CD14-positive monocyte (primary cell): ENCODE measurements at regions of chr1 and their contacts with region 1.

Region 1: DNA sequence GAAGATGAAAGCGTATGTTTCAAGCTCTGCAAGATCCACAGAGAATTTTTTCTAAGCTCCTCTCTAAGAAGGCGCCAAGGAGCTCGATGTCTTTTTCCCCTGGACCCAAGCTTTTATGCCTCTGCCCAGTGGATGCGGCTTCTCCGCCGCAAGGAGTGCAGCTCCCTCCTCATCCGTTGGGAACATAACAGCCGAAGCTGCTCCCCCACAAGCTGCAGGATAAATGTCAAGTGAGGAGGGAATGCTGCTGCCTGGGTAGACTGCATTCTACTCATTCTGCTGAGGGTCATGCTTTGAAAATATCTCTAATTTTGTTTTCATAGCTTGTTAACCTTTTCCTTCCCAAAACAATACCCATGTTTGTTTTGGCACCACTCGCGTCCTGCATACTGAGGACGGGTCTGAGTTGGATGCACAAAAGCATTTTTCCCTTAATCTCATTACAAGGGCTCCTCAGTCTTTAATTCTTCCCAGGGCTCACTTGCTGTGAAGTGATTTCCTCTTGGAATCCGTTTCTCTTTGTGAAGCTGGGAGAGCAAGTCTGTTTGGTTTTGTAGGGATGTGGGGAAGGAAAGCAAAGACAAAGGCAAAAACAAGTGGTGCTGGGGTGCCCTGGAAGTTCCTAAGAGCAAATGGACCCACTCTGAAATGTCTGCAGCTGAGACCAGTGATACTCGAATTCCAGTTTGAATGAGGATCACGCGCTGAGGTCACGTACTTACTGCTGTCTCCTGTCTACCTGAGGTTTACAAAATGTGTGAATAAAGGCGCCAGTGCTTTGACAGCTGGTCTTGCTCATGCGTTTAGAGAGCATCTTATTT is 134.0 kb upstream of the IRF2BP2 start:
- DNase-seq: no peak
- H3K4me3 ChIP-seq: no peak overlapping the region
- H3K4me3 Mint-ChIP-seq: no peak overlapping the region
- H3K27ac ChIP-seq: no peak overlapping the region
- H3K27ac Mint-ChIP-seq: no peak overlapping the region
- H3K4me1 ChIP-seq: peaks cover 19 to 20% of the 10 kb centered on the region in 2 donors
- H3K4me1 Mint-ChIP-seq: peaks cover 22% of the 10 kb centered on the region
- H3K27me3 ChIP-seq: no peaks in the 10 kb centered on the region
- H3K27me3 Mint-ChIP-seq: peaks cover 0 to 2% (median 2%) of the 10 kb centered on the region in 3 donors
- CTCF ChIP-seq: no peak

Region 2: GRCh38 chr1:234458352-234459017 is 285.5 kb before region 1 on chr1:
- intact Hi-C with region 1: no loop called
- DNase-seq: no peak
- H3K4me3 ChIP-seq: no peak overlapping the region
- H3K4me3 Mint-ChIP-seq: no peak overlapping the region
- H3K27ac ChIP-seq: no peak overlapping the region
- H3K27ac Mint-ChIP-seq: no peak overlapping the region
- H3K4me1 ChIP-seq: no peaks in the 10 kb centered on the region
- H3K4me1 Mint-ChIP-seq: peaks cover 2% of the 10 kb centered on the region
- H3K27me3 ChIP-seq: no peaks in the 10 kb centered on the region
- H3K27me3 Mint-ChIP-seq: no peaks in the 10 kb centered on the region
- CTCF ChIP-seq: no peak

Region 3: GRCh38 chr1:234699795-234700665 is 44.0 kb before region 1 on chr1:
- intact Hi-C with region 1: loop called in 1 of 2 experiments (anchors 10 kb)
- DNase-seq: peak; percentile 27 to 78 (median 44)
- H3K4me3 ChIP-seq: no peak overlapping the region
- H3K4me3 Mint-ChIP-seq: no peak overlapping the region
- H3K27ac ChIP-seq: no peak overlapping the region
- H3K27ac Mint-ChIP-seq: peak overlapping the region in 3 of 7 donors; percentile 41 to 63 (median 50)
- H3K4me1 ChIP-seq: peaks cover 0 to under 1% of the 10 kb centered on the region in 2 donors
- H3K4me1 Mint-ChIP-seq: peaks cover 16% of the 10 kb centered on the region
- H3K27me3 ChIP-seq: no peaks in the 10 kb centered on the region
- H3K27me3 Mint-ChIP-seq: no peaks in the 10 kb centered on the region
- CTCF ChIP-seq: no peak

Region 4: GRCh38 chr1:234821840-234822239 is 77.8 kb after region 1 on chr1:
- intact Hi-C with region 1: no loop called
- DNase-seq: no peak
- H3K4me3 ChIP-seq: no peak overlapping the region
- H3K4me3 Mint-ChIP-seq: no peak overlapping the region
- H3K27ac ChIP-seq: no peak overlapping the region
- H3K27ac Mint-ChIP-seq: no peak overlapping the region
- H3K4me1 ChIP-seq: no peaks in the 10 kb centered on the region
- H3K4me1 Mint-ChIP-seq: peaks cover 11% of the 10 kb centered on the region
- H3K27me3 ChIP-seq: no peaks in the 10 kb centered on the region
- H3K27me3 Mint-ChIP-seq: peaks cover 0 to 2% (median 0%) of the 10 kb centered on the region in 3 donors
- CTCF ChIP-seq: no peak